K562 (cell line): ENCODE measurements at regions of chr22 and their contacts with region 1.

Region 1: GRCh38 chr22:20319745-20320658 is at the start of gene DGCR6L:
- DNase-seq: peak in 3 of 4 experiments; percentile 100
- ATAC-seq: peak; percentile 85
- H3K4me3 ChIP-seq: peak within 1 kb of the TSS; percentile 71
- H3K27ac ChIP-seq: peak within 1 kb of the TSS; percentile 75
- H3K4me1 ChIP-seq: peaks cover 29 to 58% of the 10 kb centered on the region in 2 experiments
- H3K27me3 ChIP-seq: no peaks in the 10 kb centered on the region
- CTCF ChIP-seq: peak in 1 of 3 experiments; percentile 22; a peak in 3 of 6 replicates
- EP300 ChIP-seq: no peak
- POLR2A ChIP-seq: peak; percentile 95
- RAD21 ChIP-seq: peak in 1 of 2 experiments; percentile 19
- polyA plus RNA-seq, gene DGCR6L: 3.6 to 8.1 TPM

Region 2: DNA sequence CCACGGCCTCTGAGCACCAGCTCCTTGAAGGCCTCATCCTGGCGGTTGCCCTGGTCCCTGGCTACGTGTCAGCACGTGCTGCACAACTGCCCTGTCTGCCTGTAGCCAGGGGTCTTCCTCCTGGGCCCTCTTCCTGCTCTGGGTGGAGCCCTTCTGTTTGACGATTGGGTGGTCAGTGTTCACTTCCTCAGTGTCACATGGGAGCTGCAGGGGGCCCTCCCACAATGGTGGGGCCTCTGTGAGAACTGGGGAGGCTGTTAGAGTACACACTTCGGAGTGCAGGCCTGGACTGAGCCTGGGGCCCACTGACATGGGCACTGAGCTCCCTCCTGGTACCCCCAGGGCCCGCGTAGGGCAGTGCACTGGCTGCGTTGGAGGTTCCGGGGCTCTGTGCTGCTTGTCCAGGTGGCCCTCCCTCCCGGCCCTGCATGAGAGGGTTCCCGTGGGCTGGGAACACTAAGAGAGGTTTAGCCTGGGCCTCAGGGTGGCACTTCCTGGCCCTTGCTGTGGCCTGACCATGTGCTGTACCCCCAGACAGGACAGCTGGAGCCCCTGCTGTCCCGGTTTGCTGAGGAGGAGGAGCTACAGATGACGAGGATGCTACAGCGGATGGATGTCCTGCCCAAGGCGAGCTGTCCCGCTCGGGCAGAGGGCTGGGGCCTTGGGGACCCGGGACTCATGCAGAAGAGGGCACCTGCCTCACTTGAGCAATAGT is 13.9 kb before region 1 on chr22:
- CTCF ChIA-PET with region 1: no interaction called
- POLR2A ChIA-PET with region 1: interaction called, 19 read pairs
- in situ Hi-C with region 1: no loop called
- intact Hi-C with region 1: no loop called
- DNase-seq: peak; percentile 23 to 57 (median 52)
- ATAC-seq: no peak; the same call in 2 of the 3 replicates
- H3K4me3 ChIP-seq: no peak overlapping the region
- H3K27ac ChIP-seq: no peak overlapping the region
- H3K4me1 ChIP-seq: peaks cover 0 to 31% of the 10 kb centered on the region in 2 experiments; a peak in 2 of 5 replicates
- H3K27me3 ChIP-seq: peaks cover 49 to 86% of the 10 kb centered on the region in 2 experiments; a peak in 4 of 5 replicates
- CTCF ChIP-seq: no peak
- EP300 ChIP-seq: no peak
- POLR2A ChIP-seq: no peak
- RAD21 ChIP-seq: no peak

Region 3: GRCh38 chr22:20495861-20496681 is 176.1 kb after region 1 on chr22:
- CTCF ChIA-PET with region 1: no interaction called
- POLR2A ChIA-PET with region 1: interaction called, 3 read pairs
- in situ Hi-C with region 1: no loop called
- intact Hi-C with region 1: loop called (anchors 1 kb)
- DNase-seq: peak; percentile 100
- ATAC-seq: peak; percentile 97
- H3K4me3 ChIP-seq: peak overlapping the region; percentile 46
- H3K27ac ChIP-seq: peak overlapping the region; percentile 81
- H3K4me1 ChIP-seq: peaks cover 15 to 40% of the 10 kb centered on the region in 2 experiments
- H3K27me3 ChIP-seq: no peaks in the 10 kb centered on the region; a peak in 1 of 5 replicates
- CTCF ChIP-seq: peak; percentile 99 to 100 (median 99)
- EP300 ChIP-seq: peak; percentile 77
- POLR2A ChIP-seq: no peak
- RAD21 ChIP-seq: peak; percentile 92 to 98

Region 4: GRCh38 chr22:21652010-21652546 is 1332.1 kb after region 1 on chr22:
- CTCF ChIA-PET with region 1: no interaction called
- POLR2A ChIA-PET with region 1: no interaction called
- in situ Hi-C with region 1: loop called (anchors 25 kb)
- intact Hi-C with region 1: no loop called
- DNase-seq: peak; percentile 100
- ATAC-seq: peak; percentile 94
- H3K4me3 ChIP-seq: peak overlapping the region; percentile 47
- H3K27ac ChIP-seq: peak overlapping the region; percentile 69
- H3K4me1 ChIP-seq: peaks cover 35 to 42% of the 10 kb centered on the region in 2 experiments
- H3K27me3 ChIP-seq: no peaks in the 10 kb centered on the region
- CTCF ChIP-seq: no peak
- EP300 ChIP-seq: peak; percentile 33; the same call in 1 of the 2 replicates
- POLR2A ChIP-seq: no peak
- RAD21 ChIP-seq: no peak